ENCODE measurements at regions of chr19 and their contacts with region 1.

Region 1: GRCh38 chr19:55467236-55468053 is 2.9 kb upstream of the C19orf85 start:
- H3K4me3 ChIP-seq: no peak overlapping the region
- H3K27ac ChIP-seq: no peak overlapping the region
- H3K4me1 ChIP-seq: no peaks in the 10 kb centered on the region
- CTCF ChIP-seq: peak; percentile 91

Region 2: GRCh38 chr19:55452749-55453346 is 14.6 kb before region 1 on chr19:
- CTCF ChIA-PET with region 1: interaction called, 24 read pairs
- POLR2A ChIA-PET with region 1: interaction called, 3 read pairs
- H3K4me3 ChIP-seq: no peak overlapping the region
- H3K27ac ChIP-seq: no peak overlapping the region
- H3K4me1 ChIP-seq: no peaks in the 10 kb centered on the region
- CTCF ChIP-seq: no peak

Region 3: DNA sequence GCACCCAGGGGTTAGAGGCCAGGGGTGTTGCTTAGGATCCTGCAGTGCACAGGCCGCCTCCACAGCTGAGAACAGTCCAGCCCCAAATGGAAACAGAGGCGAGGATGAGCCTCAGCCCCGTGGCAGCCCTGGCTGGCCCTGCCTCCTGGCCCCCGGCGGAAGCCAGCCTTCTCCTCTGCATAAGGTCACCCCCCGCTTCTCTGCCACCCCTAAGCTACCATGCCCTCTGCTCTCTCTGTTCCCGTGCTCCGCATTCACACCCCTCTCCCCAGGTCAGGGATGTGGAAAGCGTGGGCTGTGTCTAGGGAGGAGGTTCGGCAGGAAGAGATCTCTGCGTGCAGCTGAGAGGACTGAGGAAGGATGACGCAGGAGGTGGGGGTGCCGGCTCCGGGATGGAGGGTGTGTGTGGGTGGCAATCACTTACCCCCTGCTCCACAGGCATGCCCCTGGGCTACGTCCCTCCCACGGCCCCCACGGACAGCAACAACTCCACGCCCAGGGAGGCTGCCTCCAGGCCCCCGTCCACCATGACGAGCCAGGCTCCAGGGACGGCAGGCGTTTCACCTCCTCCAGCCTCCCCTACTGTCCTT is 26.8 kb after region 1 on chr19:
- CTCF ChIA-PET with region 1: interaction called, 24 read pairs
- POLR2A ChIA-PET with region 1: no interaction called
- H3K4me3 ChIP-seq: no peak overlapping the region
- H3K27ac ChIP-seq: no peak overlapping the region
- H3K4me1 ChIP-seq: no peaks in the 10 kb centered on the region
- CTCF ChIP-seq: no peak

Region 4: GRCh38 chr19:55605207-55605636 is 137.8 kb after region 1 on chr19:
- CTCF ChIA-PET with region 1: interaction called, 20 read pairs
- POLR2A ChIA-PET with region 1: no interaction called
- H3K4me3 ChIP-seq: peak overlapping the region; percentile 97
- H3K27ac ChIP-seq: peak overlapping the region; percentile 88; the same call in 1 of the 2 replicates
- H3K4me1 ChIP-seq: peaks cover 8% of the 10 kb centered on the region; the same call in 1 of the 2 replicates
- CTCF ChIP-seq: no peak

Measured in HEK293 (cell line).